Motor neuron (in vitro differentiated cells): ENCODE measurements at regions of chr7 and their contacts with region 1.

Region 1: GRCh38 chr7:41977151-41977651 is 259.8 kb downstream of the GLI3 start:
- ATAC-seq: peak in 6 of 8 experiments; percentile 29 to 65 (median 50)
- H3K4me3 ChIP-seq: no peak overlapping the region
- H3K27ac ChIP-seq: no peak overlapping the region
- H3K4me1 ChIP-seq: no peaks in the 10 kb centered on the region

Region 2: DNA sequence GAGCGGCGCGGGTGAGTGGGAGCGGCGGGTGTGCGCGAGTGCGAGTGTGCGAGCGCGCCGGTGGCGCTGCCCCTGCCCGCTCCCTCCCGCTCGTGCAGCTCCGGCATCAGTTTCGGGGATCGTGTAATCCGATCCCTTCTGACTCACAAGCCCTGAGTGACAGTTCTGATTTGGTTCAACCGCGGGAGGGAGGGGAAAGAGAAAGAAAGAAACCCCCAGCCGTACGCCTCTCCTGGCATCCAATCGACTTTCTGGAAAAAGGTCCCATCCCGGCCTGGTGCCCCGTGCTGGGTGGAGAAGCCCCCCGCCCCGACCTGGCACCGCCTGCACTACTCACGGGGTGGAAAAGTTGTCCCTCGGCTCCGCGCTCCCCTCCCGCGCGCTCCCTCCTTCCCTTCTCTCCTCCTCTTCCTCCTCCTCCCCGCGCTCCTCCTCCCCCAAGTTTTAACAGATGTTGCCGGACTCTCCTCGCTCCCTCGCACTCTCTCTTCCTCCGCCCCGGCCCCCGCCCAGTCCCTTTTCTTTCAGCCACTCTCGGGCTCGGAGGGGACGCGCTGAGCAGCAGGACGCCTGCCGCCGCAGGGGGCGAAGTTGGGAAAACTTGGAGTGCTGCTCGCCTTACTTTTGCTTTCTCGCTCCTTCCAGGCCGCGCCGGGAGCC is 260.1 kb after region 1 on chr7 and contains the start of gene GLI3:
- in situ Hi-C with region 1: loop called in 3 of 9 experiments (anchors 25 kb)
- ATAC-seq: peak; percentile 58 to 77 (median 68)
- H3K4me3 ChIP-seq: peak within 1 kb of the TSS; percentile 61 to 67 (median 63)
- H3K27ac ChIP-seq: peak within 1 kb of the TSS in 1 of 2 donors; percentile 3
- H3K4me1 ChIP-seq: peaks cover 11 to 17% of the 10 kb centered on the region in 2 donors
- total RNA-seq, gene GLI3: 0.38 to 14.2 (median 4.7) TPM

Region 3: DNA sequence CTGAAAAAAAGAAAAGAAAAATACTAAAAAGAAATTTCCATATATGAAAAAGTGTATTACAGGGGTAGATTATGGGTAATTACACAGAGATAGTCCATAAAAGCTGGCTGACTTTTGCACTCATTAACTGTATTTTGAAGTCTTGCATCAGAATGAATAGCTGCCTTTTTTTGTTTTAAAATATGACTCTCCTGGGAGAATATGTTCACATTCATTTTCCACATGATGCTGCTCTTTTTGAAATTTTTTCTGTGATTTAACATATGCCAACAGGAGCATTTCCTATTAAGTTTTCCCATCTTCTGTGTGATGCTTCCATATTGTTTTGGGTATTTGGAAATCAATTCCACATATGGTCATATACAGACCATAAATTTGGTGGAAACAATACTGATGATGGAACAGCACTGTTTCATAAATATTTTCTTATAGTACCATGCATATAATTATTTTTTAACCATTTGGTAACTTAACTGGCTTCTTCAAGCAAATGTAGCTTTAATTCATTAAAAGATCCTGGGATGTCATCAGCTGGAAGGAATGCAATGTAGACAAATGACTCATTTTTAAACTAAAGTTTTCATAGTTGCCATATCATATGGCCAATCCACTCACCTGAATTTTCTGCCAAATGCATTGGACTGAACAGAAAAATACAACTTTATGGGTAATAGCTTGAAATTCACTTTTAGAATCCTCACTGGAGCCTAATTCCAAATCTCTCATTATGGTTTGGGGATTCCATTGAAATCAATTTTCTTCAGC is 573.7 kb after region 1 on chr7:
- in situ Hi-C with region 1: no loop called
- ATAC-seq: no peak
- H3K4me3 ChIP-seq: no peak overlapping the region
- H3K27ac ChIP-seq: no peak overlapping the region
- H3K4me1 ChIP-seq: no peaks in the 10 kb centered on the region